Sigmoid colon (tissue), 7 donors: ENCODE measurements at regions of chr12 and their contacts with region 1.

Region 1: DNA sequence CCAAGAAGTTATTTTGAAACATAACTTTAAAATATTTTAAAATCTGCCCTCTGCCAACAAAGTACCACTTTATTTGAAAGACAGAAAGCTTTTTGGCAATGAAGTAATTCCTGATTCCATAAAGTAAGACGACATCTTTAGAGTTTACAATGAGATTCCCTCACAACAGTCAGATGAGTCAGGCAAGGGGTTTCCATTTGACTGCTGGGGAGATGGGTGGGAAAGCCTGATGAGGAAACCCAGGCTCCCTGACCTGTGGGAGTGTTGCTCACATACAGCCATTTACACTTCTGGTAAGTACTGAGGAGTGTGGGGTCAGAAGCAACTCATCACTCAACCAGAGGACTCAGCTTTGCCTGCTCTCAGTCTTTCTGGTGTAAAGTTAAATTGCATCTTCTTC is 10.2 kb downstream of the KITLG start:
- DNase-seq: no peak
- H3K4me3 ChIP-seq: no peak overlapping the region
- H3K27ac ChIP-seq: peak overlapping the region in 3 of 4 donors; percentile 32 to 86 (median 85)
- H3K4me1 ChIP-seq: peaks cover 0 to 98% (median 88%) of the 10 kb centered on the region in 4 donors
- H3K27me3 ChIP-seq: no peaks in the 10 kb centered on the region
- CTCF ChIP-seq: no peak
- EP300 ChIP-seq: no peak
- POLR2A ChIP-seq: no peak

Region 2: DNA sequence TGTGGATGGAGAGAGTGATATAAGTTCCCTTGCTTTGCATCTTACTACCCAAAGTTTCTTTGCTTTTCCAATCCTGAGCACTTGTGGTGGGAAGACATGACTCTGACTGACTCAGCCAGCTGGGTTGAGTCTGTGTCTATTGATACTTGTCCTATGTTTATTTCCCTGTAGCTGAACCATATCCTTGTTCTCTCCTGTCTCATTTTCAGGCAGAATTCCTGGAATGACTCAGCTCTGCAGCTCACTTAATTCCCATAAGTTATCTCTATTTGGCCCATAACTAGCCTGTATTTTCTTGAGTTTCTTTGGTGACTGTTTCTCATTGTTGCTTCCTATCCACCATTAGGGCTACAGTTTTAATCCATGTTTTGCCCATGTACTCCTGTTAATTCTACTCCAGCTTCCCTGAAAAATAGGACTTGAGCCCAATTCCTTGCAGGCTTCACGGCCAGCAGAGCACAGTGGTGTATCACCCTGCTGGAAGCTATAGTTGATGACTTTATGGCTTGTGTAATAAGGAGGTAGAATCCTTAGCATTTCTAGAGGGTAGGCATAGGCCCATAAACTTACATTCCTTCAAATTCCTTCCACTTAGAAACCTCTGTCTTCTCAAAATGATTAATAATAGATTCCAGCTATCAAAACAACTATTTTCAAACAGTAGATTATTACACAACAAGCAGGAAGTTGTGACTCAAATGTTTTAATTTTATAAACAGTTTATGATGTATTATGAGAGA is 244.9 kb before region 1 on chr12:
- intact Hi-C with region 1: loop called (anchors 5 kb)
- DNase-seq: no peak
- H3K4me3 ChIP-seq: no peak overlapping the region
- H3K27ac ChIP-seq: peak overlapping the region; percentile 55 to 78 (median 65)
- H3K4me1 ChIP-seq: peaks cover 0 to 42% (median 25%) of the 10 kb centered on the region in 4 donors
- H3K27me3 ChIP-seq: no peaks in the 10 kb centered on the region
- CTCF ChIP-seq: no peak
- EP300 ChIP-seq: no peak
- POLR2A ChIP-seq: no peak